Heart left ventricle (tissue), 16 donors: ENCODE measurements at regions of chr5 and their contacts with region 1.

Region 1: DNA sequence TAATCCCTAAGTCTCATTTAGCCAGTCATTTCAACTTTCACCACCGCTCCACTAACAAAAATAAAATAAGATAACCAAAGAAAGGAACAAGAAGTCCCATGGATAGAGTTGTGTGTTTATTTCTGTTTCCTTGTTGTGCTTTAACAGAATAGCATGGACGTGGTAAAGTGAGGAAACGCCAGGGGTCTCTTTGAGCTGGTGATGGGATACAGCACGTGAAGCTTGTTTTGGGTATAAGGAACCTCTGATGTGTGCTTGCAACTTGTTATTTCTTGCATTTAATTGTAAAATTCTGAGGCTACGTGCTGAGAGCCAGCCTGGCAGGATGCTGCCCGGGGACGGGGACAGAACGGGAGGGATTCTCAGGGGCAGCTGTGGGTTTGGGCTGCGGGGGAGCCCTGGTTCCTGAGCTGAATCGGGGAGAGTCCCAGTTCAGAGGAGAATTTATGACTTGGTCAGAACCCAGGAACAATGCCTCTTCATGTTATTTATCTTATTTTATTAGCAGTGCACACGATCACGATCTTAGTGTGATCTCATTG is 63.4 kb downstream of the ANKRD33B start:
- DNase-seq: no peak
- ATAC-seq: peak in 1 of 4 donors; percentile 6
- H3K4me3 ChIP-seq: peak overlapping the region in 9 of 12 donors; percentile 8 to 47 (median 35)
- H3K27ac ChIP-seq: peak overlapping the region in 9 of 12 donors; percentile 2 to 77 (median 28)
- H3K4me1 ChIP-seq: peaks cover 0 to 48% (median 25%) of the 10 kb centered on the region in 12 donors
- H3K27me3 ChIP-seq: no peaks in the 10 kb centered on the region
- CTCF ChIP-seq: no peak
- POLR2A ChIP-seq: no peak

Region 2: GRCh38 chr5:10283927-10284635 is 343.1 kb before region 1 on chr5:
- intact Hi-C with region 1: loop called in 6 of 10 experiments (anchors 5 to 10 kb)
- DNase-seq: peak; percentile 81 to 91 (median 85)
- ATAC-seq: peak; percentile 67 to 89 (median 86)
- H3K4me3 ChIP-seq: no peak overlapping the region
- H3K27ac ChIP-seq: no peak overlapping the region
- H3K4me1 ChIP-seq: peaks cover 0 to 17% (median 6%) of the 10 kb centered on the region in 12 donors
- H3K27me3 ChIP-seq: no peaks in the 10 kb centered on the region
- CTCF ChIP-seq: peak; percentile 82 to 98 (median 94)
- POLR2A ChIP-seq: no peak

Region 3: GRCh38 chr5:10295619-10296326 is 331.5 kb before region 1 on chr5:
- intact Hi-C with region 1: loop called in 1 of 10 experiments (anchors 10 kb)
- DNase-seq: no peak
- ATAC-seq: no peak
- H3K4me3 ChIP-seq: no peak overlapping the region
- H3K27ac ChIP-seq: no peak overlapping the region
- H3K4me1 ChIP-seq: no peaks in the 10 kb centered on the region
- H3K27me3 ChIP-seq: no peaks in the 10 kb centered on the region
- CTCF ChIP-seq: no peak
- POLR2A ChIP-seq: no peak

Region 4: GRCh38 chr5:10452768-10453331 is 174.4 kb before region 1 on chr5:
- intact Hi-C with region 1: loop called (anchors 1 to 2 kb)
- DNase-seq: no peak
- ATAC-seq: peak; percentile 74 to 84 (median 82)
- H3K4me3 ChIP-seq: no peak overlapping the region
- H3K27ac ChIP-seq: no peak overlapping the region
- H3K4me1 ChIP-seq: peaks cover 3 to 25% (median 12%) of the 10 kb centered on the region in 12 donors
- H3K27me3 ChIP-seq: no peaks in the 10 kb centered on the region
- CTCF ChIP-seq: peak; percentile 63 to 90 (median 80)
- POLR2A ChIP-seq: no peak

Region 5: DNA sequence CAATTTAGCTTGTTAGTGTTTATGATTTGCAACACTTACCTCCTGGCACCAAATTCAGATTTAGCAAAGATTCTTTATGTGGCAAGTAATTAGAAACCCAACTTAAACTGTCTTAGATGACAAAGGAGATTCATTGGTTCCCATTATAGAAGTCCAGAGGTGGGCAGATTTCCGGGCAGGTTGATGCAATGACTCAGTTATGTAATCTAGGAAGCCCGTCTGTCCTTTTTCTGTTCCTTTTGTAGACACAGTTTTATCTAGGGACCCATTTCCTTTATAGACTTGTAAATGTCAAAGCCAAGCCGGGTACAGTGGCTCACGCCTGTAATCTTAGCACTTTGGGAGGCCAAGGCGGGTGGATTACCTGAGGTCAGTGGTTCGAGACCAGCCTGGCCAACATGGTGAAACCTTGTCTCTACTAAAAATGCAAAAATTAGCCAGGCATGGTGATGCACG is 83.6 kb before region 1 on chr5:
- intact Hi-C with region 1: no loop called
- DNase-seq: no peak
- ATAC-seq: no peak
- H3K4me3 ChIP-seq: no peak overlapping the region
- H3K27ac ChIP-seq: no peak overlapping the region
- H3K4me1 ChIP-seq: peaks cover 0 to 14% (median 0%) of the 10 kb centered on the region in 12 donors
- H3K27me3 ChIP-seq: peaks cover 0 to 4% (median 0%) of the 10 kb centered on the region in 9 donors
- CTCF ChIP-seq: no peak
- POLR2A ChIP-seq: no peak

Region 6: GRCh38 chr5:10577371-10578292 is 49.6 kb before region 1 on chr5:
- intact Hi-C with region 1: loop called in 1 of 10 experiments (anchors 10 kb)
- DNase-seq: peak in 4 of 5 donors; percentile 68 to 78 (median 72)
- ATAC-seq: peak; percentile 86 to 95 (median 92)
- H3K4me3 ChIP-seq: no peak overlapping the region
- H3K27ac ChIP-seq: peak overlapping the region in 11 of 12 donors; percentile 38 to 93 (median 78)
- H3K4me1 ChIP-seq: peaks cover 0 to 54% (median 36%) of the 10 kb centered on the region in 12 donors
- H3K27me3 ChIP-seq: no peaks in the 10 kb centered on the region
- CTCF ChIP-seq: no peak
- POLR2A ChIP-seq: no peak

Region 7: DNA sequence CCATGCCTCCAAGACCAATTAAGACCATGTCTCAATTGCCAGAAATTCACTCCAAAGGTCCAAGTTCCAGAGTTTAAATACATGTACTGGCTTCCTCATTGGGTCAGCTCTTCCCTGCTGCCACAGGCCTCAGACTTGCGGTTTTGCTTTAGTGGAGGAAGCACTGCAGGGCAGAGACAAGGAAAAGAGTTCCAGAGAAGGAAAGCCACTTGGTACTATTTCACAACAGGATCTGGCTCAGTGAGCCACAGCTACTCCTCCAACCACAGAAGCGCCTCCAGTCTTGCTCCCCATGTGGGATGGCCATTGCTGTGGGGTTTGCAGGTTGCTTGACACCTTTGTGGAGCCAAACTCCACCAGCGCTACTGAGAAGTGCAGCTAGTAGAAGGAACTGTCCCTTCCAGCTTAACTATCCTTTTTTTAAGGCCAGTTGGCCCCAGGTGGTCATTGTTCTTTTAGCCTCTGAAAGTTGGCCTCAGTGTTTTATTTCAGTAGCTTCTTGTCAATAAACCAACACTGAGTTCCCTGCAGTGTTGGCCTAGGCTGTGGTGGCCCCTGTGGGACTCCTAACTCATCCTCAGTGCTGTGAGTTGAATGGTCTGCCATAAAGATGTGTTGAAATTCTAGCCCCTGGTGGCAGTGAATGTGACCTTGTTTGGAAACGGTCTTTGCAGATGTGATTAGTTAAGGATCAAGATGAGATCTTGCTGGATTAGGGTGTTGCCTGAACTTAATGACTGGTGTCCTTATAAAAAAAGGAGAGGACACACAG is 227.5 kb after region 1 on chr5:
- intact Hi-C with region 1: no loop called
- DNase-seq: no peak
- ATAC-seq: peak in 3 of 4 donors; percentile 27 to 47 (median 38)
- H3K4me3 ChIP-seq: no peak overlapping the region
- H3K27ac ChIP-seq: no peak overlapping the region
- H3K4me1 ChIP-seq: peaks cover 0 to 33% (median 7%) of the 10 kb centered on the region in 12 donors
- H3K27me3 ChIP-seq: peaks cover 0 to 9% (median 0%) of the 10 kb centered on the region in 9 donors
- CTCF ChIP-seq: no peak
- POLR2A ChIP-seq: no peak